Cardiac septum (tissue), 1 donor: ENCODE measurements at regions of chr12 and their contacts with region 1.

Region 1: GRCh38 chr12:90978117-90978770 is 23.3 kb upstream of the CCER1 start:
- DNase-seq: no peak

Region 2: DNA sequence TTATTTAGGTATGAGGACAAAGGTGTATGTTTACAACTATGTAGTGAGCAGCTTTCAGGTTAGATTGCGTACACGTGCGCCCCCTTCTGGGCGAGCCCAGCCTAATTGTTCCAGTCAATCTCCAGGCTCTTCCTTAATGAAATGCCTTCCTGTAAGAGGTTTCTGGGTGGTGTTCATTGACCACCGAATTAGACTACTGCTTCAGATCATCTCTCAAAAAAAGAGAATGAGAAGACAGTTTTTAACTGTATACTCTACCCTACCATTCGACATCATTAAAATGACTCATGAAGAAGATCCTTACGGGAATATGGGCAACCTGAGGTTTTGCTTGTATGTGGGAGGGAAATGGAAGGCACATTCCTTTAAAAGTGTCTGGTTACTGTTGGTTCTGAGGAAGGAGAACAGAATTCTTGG is 130.9 kb after region 1 on chr12:
- intact Hi-C with region 1: loop called (anchors 2 kb)
- DNase-seq: peak; percentile 77

Region 3: DNA sequence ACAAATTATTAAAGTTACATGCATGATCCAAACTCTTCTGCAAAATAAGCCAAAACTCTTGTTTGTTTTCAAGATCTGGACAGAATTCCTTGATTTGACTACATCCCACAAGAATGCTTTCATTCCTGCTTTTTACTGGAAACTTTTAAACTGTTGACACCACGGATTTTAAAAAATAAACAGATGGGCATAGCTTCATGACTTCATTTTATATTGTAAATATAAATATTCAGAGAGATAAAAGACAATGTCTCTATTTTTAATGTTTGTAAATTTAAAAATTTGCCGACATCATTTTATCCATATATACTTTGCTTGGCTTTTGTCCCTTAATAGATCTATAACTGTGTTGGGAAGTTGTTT is 338.6 kb after region 1 on chr12:
- intact Hi-C with region 1: no loop called
- DNase-seq: no peak

Region 4: GRCh38 chr12:91355150-91356006 is 377.1 kb after region 1 on chr12:
- intact Hi-C with region 1: loop called (anchors 5 kb)
- DNase-seq: peak; percentile 77